Cardiac septum (tissue), 1 donor: ENCODE measurements at regions of chr2 and their contacts with region 1.

Region 1: GRCh38 chr2:108607706-108608301 is 73.5 kb downstream of the LIMS1 start:
- DNase-seq: no peak

Region 2: GRCh38 chr2:108448678-108449493 is 158.9 kb before region 1 on chr2 and contains the start of gene GCC2:
- intact Hi-C with region 1: no loop called
- DNase-seq: peak; percentile 98
- total RNA-seq, gene GCC2: 22.0 TPM

Region 3: DNA sequence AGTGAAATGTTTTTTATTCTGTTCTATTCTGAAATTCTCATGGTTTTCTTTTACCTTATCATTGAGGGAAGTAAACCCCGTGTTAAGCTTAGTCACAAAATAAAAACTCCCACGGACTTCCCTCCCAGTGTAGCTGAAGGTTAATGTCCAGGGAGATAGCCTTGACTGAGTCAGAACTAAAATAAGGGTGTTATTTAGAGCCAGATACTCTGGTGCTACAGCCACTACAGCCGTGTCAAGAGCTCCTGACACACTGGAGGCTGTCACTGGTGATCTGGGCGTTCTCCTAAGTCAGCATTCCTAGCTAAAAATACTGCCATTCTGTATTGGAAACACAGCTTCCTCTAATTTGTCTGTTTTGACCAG is 29.5 kb after region 1 on chr2:
- intact Hi-C with region 1: loop called (anchors 2 kb)
- DNase-seq: no peak

Region 4: GRCh38 chr2:108719149-108720044 is 111.6 kb after region 1 on chr2 and contains the start of gene RANBP2:
- intact Hi-C with region 1: loop called (anchors 5 kb)
- DNase-seq: peak; percentile 97
- total RNA-seq, gene RANBP2: 58.6 TPM